HAP-1 (cell line): ENCODE measurements at regions of chr16 and their contacts with region 1.

Region 1: DNA sequence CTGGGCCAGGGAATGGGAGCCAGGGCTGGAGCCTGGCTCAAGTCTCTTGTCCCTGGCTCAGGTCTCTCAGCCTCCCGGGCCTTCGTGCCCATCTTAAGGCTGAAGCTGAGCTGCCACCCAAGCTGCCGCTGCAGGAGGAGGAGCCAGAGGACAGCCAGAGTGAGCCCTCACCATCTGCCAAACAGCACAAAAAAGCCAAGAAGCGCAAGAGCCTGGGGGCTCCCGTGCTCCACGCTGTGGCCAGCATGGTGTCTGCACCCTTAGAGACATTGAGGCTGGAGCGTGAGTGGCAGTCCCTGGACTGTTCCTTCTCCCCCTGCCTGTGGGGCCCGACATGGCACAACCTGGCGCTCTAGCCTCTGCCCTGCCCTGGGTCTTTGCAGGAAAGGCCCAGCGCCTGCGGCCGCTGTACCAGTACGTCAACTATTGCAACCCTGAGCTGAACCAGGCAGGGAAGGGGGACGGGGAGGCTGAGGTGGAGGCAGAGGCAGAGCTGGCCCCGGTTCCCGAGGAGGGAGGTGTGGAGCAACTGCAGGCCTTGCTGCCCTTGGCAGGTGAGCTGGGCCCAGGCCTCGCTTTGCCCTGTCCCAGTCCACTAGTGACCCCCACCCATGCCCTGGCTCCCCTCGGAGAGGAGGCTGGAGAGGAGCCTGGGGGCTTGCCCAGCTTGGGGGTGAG is 1.3 kb downstream of the C16orf86 start:
- DNase-seq: peak; percentile 91 to 94
- H3K4me3 ChIP-seq: peak overlapping the region; percentile 73
- H3K4me1 ChIP-seq: peaks cover 23% of the 10 kb centered on the region
- H3K27me3 ChIP-seq: no peaks in the 10 kb centered on the region

Region 2: DNA sequence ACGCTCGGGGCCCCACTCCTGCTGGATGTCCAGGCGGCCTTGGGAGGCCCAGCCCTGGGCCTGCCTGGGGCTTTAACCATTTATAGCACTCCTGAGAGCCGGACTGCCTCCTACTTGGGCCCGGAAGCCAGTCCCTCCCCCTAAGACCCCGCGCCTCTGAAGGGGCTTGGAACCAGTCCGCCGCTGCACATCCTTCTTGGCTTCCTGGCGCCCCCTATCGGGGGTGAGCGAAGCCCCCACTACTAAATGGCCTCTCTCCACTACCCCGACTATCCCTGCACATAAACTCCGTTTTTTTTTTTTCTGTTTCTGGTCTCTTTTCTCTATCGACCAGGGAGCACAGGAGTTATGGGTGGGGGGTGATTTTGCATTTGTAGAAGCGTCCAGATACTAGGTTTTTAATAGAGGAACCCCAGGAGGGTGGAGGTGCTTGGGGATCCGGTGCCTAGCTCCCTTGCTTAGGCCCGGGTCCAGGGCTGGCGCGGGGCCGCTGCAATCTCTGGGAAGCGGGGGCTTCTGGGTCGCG is 498.3 kb before region 1 on chr16:
- in situ Hi-C with region 1: no loop called
- DNase-seq: peak; percentile 28 to 88
- H3K4me3 ChIP-seq: peak overlapping the region; percentile 41
- H3K4me1 ChIP-seq: peaks cover 31% of the 10 kb centered on the region
- H3K27me3 ChIP-seq: no peaks in the 10 kb centered on the region

Region 3: DNA sequence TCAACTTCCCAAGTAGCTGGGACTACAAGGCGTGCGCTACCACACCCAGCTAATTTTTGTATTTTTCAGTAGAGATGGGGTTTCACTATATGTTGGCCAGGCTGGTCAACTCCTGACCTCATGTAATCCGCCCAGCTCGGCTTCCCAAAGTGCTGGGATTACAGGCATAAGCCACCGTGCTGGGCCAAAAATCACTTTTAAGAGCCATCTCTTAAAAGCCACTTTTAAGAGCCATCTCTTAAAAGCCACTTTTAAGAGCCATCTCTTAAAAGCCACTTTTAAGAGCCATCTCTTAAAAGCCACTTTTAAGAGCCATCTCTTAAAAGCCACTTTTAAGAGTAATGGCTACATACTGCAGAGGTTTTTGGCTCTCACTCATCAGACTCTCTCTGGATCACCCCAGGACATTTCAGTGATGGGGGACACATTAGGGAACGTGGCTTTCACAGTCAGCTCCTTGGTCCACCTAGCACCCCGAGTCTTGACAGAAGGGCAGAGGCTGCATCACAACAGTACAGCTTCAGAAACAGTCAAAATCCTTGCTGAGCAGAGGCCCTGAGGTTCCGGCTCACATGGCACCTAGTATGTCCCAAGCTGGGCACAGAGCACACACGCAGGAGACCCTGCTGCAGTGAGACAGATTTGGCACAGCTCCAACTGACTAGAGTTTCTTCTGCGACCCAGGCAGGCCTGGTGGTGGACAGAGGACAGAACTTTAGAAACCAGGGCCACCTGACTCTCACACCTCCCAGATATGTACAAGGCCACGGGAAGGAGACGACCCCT is 114.8 kb after region 1 on chr16:
- in situ Hi-C with region 1: no loop called
- DNase-seq: no peak
- H3K4me3 ChIP-seq: no peak overlapping the region
- H3K4me1 ChIP-seq: no peaks in the 10 kb centered on the region
- H3K27me3 ChIP-seq: no peaks in the 10 kb centered on the region

Region 4: DNA sequence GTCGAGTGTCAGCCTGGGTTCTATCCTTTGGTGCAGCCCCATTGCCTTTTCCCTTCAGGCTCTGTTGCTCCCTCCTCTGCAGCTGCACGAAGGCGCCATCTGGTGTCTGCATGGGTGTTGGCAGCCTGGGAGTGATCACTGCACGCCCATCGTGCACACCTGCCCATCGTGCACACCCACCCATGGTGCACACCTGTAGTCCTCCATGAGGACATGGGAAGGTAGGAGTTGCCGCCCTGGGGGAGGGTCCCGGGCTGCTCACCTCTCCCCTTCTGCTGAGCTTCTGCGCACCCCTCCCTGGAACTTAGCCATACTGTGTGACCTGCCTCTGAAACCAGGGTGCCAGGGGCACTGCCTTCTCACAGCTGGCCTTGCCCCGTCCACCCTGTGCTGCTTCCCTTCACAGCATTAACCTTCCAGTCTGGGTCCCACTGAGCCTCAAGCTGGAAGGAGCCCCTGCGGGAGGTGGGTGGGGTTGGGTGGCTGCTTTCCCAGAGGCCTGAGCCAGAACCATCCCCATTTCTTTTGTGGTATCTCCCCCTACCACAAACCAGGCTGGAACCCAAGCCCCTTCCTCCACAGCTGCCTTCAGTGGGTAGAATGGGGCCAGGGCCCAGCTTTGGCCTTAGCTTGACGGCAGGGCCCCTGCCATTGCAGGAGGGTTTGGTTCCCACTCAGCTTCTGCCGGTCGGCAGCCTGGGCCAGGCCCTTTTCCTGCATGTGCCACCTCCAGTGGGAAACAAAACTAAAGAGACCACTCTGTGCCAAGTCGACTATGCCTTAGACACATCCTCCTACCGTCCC is 260.8 kb after region 1 on chr16:
- in situ Hi-C with region 1: loop called (anchors 5 kb)
- DNase-seq: peak; percentile 66 to 85
- H3K4me3 ChIP-seq: no peak overlapping the region
- H3K4me1 ChIP-seq: no peaks in the 10 kb centered on the region
- H3K27me3 ChIP-seq: no peaks in the 10 kb centered on the region